Naive thymus-derived CD4-positive, alpha-beta T cell (primary cell): ENCODE measurements at regions of chr4 and their contacts with region 1.

Region 1: DNA sequence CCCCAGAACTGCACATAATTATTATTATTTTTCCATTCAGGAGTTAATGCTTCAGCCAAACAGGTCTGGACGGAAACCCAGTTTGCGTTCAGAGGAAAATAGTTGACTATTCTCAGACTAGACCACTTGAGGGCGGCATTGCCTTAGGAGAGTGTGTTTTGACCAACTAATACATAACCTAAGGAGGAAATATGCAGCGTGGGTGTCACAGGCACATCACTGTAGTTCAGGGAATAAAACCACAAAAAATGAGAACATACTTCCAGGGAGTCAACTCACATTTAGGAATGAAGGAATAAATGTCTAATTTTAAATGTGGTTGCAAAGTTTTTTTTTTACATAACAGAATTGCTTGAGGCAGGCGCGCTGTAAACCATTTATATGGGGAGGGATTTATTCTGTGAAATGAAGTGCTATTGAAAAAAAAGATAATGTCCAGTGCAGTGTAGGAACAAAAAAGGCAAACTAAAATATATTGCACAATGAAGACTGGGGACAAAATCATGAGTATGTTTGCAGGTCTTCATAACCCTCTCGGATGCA is 93.3 kb downstream of the SYNPO2 start:
- DNase-seq: peak in 8 of 9 donors; percentile 14 to 55 (median 38)
- ATAC-seq: peak; percentile 88
- H3K4me3 ChIP-seq: no peak overlapping the region
- H3K4me3 Mint-ChIP-seq: no peak overlapping the region
- H3K27ac ChIP-seq: no peak overlapping the region
- H3K27ac Mint-ChIP-seq: no peak overlapping the region
- H3K4me1 ChIP-seq: no peaks in the 10 kb centered on the region
- H3K4me1 Mint-ChIP-seq: peaks cover 0 to 2% (median 0%) of the 10 kb centered on the region in 7 donors
- H3K27me3 ChIP-seq: no peaks in the 10 kb centered on the region
- H3K27me3 Mint-ChIP-seq: peaks cover 0 to 18% (median 0%) of the 10 kb centered on the region in 5 donors

Region 2: GRCh38 chr4:118865091-118865708 is 116.7 kb before region 1 on chr4:
- CTCF ChIA-PET with region 1: no interaction called
- POLR2A ChIA-PET with region 1: no interaction called
- intact Hi-C with region 1: no loop called
- DNase-seq: peak in 6 of 9 donors; percentile 7 to 39 (median 28)
- ATAC-seq: peak; percentile 77
- H3K4me3 ChIP-seq: no peak overlapping the region
- H3K4me3 Mint-ChIP-seq: no peak overlapping the region
- H3K27ac ChIP-seq: no peak overlapping the region
- H3K27ac Mint-ChIP-seq: no peak overlapping the region
- H3K4me1 ChIP-seq: no peaks in the 10 kb centered on the region
- H3K4me1 Mint-ChIP-seq: peaks cover 0 to 7% (median 0%) of the 10 kb centered on the region in 7 donors
- H3K27me3 ChIP-seq: no peaks in the 10 kb centered on the region
- H3K27me3 Mint-ChIP-seq: peaks cover 0 to 16% (median 0%) of the 10 kb centered on the region in 5 donors

Region 3: DNA sequence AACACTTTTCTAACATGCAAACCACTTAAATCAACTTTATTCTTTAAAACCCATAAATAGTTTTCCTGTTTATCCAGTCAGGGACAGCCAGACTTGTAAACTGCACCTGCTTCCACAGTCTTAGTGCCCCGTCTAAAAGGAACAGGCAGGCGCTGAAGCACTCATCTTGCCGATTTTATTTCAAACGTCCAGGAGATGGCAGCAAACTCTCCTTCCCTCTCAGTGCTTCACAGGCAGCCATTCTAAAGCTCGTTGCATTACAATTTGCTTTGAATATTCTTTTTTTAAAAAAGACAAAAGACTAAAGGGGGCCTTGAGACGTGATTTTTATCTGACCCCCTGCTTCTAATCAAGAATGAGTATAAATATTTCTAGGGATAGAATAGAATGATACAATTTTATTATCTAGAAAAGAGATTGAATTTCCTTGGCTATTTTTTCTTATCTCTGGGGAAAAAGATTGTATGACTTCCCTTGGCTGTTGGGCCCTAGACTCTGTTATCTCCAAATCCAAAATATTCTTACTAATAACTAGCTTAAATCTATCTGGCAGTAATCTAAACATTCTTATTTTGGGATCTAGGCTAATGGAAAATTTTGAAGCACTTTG is 60.1 kb after region 1 on chr4:
- CTCF ChIA-PET with region 1: interaction called, 4 read pairs
- POLR2A ChIA-PET with region 1: no interaction called
- intact Hi-C with region 1: loop called (anchors 1 to 5 kb)
- DNase-seq: peak in 7 of 9 donors; percentile 30 to 72 (median 61)
- ATAC-seq: peak; percentile 94
- H3K4me3 ChIP-seq: no peak overlapping the region
- H3K4me3 Mint-ChIP-seq: peak overlapping the region in 1 of 10 donors; percentile 25
- H3K27ac ChIP-seq: no peak overlapping the region
- H3K27ac Mint-ChIP-seq: no peak overlapping the region
- H3K4me1 ChIP-seq: no peaks in the 10 kb centered on the region
- H3K4me1 Mint-ChIP-seq: peaks cover 0 to 12% (median 0%) of the 10 kb centered on the region in 7 donors
- H3K27me3 ChIP-seq: no peaks in the 10 kb centered on the region
- H3K27me3 Mint-ChIP-seq: peaks cover 0 to 3% (median 0%) of the 10 kb centered on the region in 5 donors

Region 4: GRCh38 chr4:119471259-119471658 is 489.3 kb after region 1 on chr4:
- CTCF ChIA-PET with region 1: no interaction called
- POLR2A ChIA-PET with region 1: no interaction called
- intact Hi-C with region 1: loop called in 1 of 2 experiments (anchors 10 kb)
- DNase-seq: no peak
- ATAC-seq: no peak
- H3K4me3 ChIP-seq: no peak overlapping the region
- H3K4me3 Mint-ChIP-seq: no peak overlapping the region
- H3K27ac ChIP-seq: no peak overlapping the region
- H3K27ac Mint-ChIP-seq: no peak overlapping the region
- H3K4me1 ChIP-seq: no peaks in the 10 kb centered on the region
- H3K4me1 Mint-ChIP-seq: peaks cover 0 to 3% (median 0%) of the 10 kb centered on the region in 7 donors
- H3K27me3 ChIP-seq: no peaks in the 10 kb centered on the region
- H3K27me3 Mint-ChIP-seq: no peaks in the 10 kb centered on the region